H1 (cell line): ENCODE measurements at regions of chr1 and their contacts with region 1.

Region 1: DNA sequence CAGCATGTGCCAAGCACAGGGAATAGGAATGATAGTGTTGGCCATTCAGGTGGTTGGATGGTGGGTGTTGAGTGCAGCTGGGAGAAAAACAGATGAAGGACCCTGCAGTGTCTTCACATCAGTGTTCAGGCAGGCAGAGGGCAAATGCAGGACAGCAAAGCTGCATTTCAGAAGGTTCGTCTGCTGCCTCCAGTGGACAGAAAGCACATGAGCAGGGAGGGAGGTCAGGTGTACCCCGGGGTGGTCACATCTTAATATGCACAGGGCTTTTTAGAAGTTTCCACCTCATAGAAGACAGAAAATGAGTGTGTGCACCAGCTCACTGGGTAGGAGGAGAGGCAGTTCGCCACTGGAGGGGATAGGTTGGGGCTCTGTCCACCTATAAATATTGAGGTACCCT is 184.9 kb downstream of the SLC35F3 start:
- DNase-seq: no peak
- H3K4me3 ChIP-seq: no peak overlapping the region
- H3K27ac ChIP-seq: no peak overlapping the region
- H3K4me1 ChIP-seq: no peaks in the 10 kb centered on the region
- H3K27me3 ChIP-seq: no peaks in the 10 kb centered on the region
- CTCF ChIP-seq: peak; percentile 61 to 85 (median 83)
- EP300 ChIP-seq: no peak
- POLR2A ChIP-seq: no peak
- RAD21 ChIP-seq: peak; percentile 52 to 58

Region 2: GRCh38 chr1:234072793-234073192 is 16.6 kb before region 1 on chr1:
- CTCF ChIA-PET with region 1: interaction called, 11 read pairs
- POLR2A ChIA-PET with region 1: no interaction called
- DNase-seq: no peak
- H3K4me3 ChIP-seq: no peak overlapping the region
- H3K27ac ChIP-seq: no peak overlapping the region
- H3K4me1 ChIP-seq: peaks cover 0 to 3% (median 0%) of the 10 kb centered on the region in 4 experiments; a peak in 1 of 7 replicates
- H3K27me3 ChIP-seq: no peaks in the 10 kb centered on the region
- CTCF ChIP-seq: no peak
- EP300 ChIP-seq: no peak
- POLR2A ChIP-seq: no peak
- RAD21 ChIP-seq: no peak

Region 3: DNA sequence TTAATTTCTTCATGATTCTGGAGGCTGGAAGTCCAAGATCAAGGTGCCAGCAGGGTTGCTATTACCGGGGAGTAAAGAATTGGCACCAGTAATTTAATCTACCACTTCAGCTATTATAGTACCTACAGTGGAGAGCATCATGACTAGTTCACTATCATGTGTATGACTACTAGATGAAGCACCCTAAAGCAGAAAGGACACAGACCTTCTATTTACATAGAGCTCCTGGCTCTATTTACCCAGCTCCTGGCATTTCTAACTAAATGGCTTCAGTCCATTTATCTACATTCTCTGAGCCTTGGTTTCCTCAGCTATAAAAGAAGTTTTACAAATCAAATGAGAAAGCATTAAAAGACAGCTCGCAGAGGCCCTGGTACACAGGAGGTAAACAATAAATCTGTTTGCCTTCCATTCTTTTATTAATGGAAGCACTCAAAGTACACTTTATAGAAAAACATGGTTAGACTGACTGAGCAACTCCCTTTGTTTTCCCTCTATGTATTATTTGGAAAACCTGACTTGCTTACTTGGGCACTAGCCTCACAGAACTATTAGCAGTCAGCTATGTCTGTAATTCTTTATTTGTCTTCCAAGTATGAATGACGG is 18.1 kb after region 1 on chr1:
- CTCF ChIA-PET with region 1: interaction called, 14 read pairs
- POLR2A ChIA-PET with region 1: no interaction called
- DNase-seq: no peak
- H3K4me3 ChIP-seq: no peak overlapping the region
- H3K27ac ChIP-seq: no peak overlapping the region
- H3K4me1 ChIP-seq: peaks cover 0 to 4% (median 0%) of the 10 kb centered on the region in 4 experiments; a peak in 1 of 7 replicates
- H3K27me3 ChIP-seq: no peaks in the 10 kb centered on the region
- CTCF ChIP-seq: no peak
- EP300 ChIP-seq: no peak
- POLR2A ChIP-seq: no peak
- RAD21 ChIP-seq: no peak

Region 4: DNA sequence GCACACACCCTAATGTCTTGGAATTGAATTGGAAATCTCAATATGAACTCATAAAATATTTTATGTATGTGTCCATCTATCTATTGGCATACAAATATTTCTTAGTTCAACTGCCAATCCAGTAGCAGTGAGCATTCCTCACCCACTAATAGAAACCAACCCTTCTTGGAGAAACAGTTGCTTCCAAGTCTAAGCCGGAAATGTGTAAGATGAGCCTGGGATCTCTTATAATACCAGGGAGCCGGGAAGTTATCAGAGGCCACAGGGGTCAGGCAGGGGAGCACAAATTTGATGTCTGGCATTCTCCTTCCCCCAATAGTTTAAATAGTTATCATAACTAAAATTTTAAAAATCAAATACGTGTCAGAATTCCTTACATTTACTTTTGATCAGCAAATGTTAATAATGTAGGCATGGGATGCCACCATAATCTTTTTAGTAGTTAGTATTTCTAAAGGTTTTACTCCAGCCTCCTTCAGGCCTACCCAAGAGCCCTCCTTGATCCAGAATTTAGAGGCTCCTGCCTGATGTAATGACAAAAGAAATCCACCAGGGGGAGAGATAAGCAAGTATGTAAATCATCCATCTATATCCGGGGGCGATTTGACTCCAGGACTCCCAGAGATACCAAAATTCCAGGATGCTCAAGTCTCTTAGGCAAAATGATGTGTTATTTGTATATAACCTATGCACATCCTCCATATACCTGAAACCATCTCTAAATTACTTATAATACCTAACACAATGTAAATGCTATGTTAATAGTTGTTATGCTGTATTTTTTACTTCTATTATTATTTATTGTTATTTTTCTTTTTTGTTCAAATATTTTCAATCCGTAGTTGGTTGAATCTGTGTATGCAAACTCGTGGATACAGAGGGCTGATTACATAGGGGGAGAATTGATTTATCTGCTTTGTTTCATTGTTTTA is 65.2 kb after region 1 on chr1:
- CTCF ChIA-PET with region 1: no interaction called
- POLR2A ChIA-PET with region 1: no interaction called
- DNase-seq: peak in 1 of 2 experiments; percentile 23
- H3K4me3 ChIP-seq: no peak overlapping the region
- H3K27ac ChIP-seq: no peak overlapping the region
- H3K4me1 ChIP-seq: peaks cover 0 to 4% (median 0%) of the 10 kb centered on the region in 4 experiments; a peak in 1 of 7 replicates
- H3K27me3 ChIP-seq: no peaks in the 10 kb centered on the region
- CTCF ChIP-seq: peak in 2 of 3 experiments; percentile 57 to 70; a peak in 3 of 4 replicates
- EP300 ChIP-seq: no peak
- POLR2A ChIP-seq: no peak
- RAD21 ChIP-seq: peak; percentile 65 to 74

Region 5: DNA sequence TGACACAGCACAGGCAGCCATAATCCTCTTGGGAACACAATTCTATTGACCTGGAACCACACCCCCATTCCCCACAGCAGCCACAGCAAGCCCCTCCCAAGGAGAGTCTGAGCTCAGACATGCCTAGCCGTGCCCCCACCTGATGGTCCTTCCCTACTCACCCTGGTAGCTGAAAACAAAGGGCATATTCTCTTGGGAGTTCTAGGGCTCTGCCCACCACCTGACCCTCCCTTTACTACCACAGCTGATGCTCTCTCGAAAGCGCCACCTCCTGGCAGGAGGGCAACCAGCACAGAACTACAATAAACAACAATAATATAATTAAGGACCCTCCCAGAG is 99.0 kb after region 1 on chr1:
- CTCF ChIA-PET with region 1: no interaction called
- POLR2A ChIA-PET with region 1: no interaction called
- DNase-seq: peak; percentile 64 to 85
- H3K4me3 ChIP-seq: no peak overlapping the region
- H3K27ac ChIP-seq: peak overlapping the region; percentile 65; the same call in 1 of the 2 replicates
- H3K4me1 ChIP-seq: peaks cover 0 to 5% (median 2%) of the 10 kb centered on the region in 4 experiments; a peak in 4 of 7 replicates
- H3K27me3 ChIP-seq: no peaks in the 10 kb centered on the region
- CTCF ChIP-seq: peak; percentile 69 to 73 (median 71)
- EP300 ChIP-seq: no peak; a peak in 1 of 3 replicates
- POLR2A ChIP-seq: no peak
- RAD21 ChIP-seq: peak; percentile 53 to 58